ENCODE measurements at regions of chr6 and their contacts with region 1.

Region 1: DNA sequence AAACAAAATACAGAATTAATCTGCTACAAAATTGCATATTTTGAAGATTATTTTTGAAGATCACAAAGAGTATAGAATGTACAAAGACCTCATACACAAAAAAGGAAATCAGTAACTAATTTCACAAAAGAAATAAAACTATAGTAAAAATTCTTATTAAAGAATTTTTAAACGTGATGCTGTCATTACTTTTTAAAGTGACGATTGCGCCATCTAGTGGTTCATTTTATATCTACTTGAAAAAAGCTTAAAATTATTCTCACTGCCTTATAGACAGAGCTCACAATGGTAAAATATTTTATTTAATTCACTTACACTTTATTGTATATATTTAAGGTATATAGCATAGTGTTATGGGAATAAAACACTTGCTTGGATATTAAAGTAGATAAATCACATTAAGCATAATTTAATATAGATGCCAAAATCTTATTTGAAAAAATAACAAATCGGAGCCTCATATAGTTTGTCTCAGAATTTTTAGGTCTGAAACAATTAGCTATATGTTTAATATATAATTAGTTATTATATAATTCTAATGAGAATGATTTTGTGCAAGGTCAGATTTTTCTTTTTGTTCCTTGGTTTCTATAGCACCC is 128.8 kb downstream of the PHF3 start:
- DNase-seq: no peak
- H3K4me3 ChIP-seq: no peak overlapping the region
- CTCF ChIP-seq: no peak

Region 2: DNA sequence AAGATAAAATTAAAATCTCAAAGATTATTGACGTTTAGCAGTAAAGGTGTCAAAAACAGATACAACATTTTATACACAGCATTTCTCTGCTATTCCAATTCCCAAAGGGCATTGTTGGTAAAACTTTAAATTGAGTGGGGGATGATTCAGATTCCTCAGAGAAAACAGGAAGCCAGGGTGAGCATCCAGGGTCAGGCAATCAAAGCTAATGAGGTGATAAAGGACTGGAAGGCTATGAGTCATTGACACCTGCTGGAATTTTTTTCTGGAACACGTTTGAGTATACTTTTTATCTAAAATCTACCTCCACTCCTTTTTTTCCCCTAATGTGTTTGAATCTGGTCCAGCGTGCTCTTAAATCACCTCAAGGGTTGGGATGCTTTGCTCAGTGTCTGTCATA is 501.0 kb before region 1 on chr6:
- CTCF ChIA-PET with region 1: no interaction called
- POLR2A ChIA-PET with region 1: no interaction called
- DNase-seq: no peak
- H3K4me3 ChIP-seq: no peak overlapping the region
- CTCF ChIP-seq: no peak

Region 3: GRCh38 chr6:63307581-63308246 is 456.7 kb before region 1 on chr6:
- CTCF ChIA-PET with region 1: interaction called, 13 read pairs
- POLR2A ChIA-PET with region 1: no interaction called
- DNase-seq: no peak
- H3K4me3 ChIP-seq: no peak overlapping the region
- CTCF ChIP-seq: peak; percentile 54

Measured in AG04449 (cell line).